Cardiac septum (tissue), 1 donor: ENCODE measurements at regions of chr16 and their contacts with region 1.

Region 1: DNA sequence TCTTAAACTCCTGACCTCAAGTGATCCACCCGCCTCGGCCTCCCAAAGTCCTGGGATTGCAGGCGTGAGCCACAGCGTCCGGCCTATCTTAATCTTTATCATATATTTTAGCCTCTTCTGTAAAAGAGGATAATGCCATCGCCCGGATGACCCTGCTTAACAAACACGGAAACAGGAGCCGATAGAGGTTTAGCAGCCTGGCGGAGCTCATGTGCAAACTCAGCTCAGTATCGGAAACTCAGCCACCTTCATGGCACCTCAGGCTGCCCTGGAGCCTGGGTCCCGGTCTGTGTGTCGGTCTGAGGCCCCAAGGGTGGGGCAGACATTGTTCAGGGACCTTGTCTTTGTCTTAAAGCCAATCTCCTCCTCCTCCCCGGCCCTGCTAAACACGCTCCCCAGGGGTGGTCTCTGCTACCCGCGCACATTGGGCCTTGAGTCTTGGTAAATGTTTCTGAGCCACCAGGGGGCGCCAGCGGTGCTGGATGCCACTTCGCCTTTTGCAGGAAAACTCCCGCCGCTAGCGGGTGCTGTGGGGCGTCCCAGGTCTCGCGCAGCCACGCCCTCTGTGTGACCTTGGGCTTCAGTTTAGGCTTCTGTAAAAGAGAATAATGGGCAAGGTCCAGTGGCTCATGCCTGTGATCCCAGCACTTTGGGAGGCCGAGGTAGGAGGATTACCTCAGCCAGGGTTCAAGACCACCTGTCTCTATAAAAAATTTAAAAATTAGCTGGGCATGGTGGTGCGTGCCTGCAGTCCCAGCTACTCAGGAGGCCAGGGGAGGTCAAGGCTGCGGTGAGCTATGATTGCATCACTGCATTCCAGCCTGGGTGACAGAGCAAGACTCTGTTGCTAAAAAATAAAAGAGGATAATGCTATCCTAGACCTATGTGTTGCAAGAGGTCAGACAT is 2.7 kb downstream of the CETP start:
- DNase-seq: peak; percentile 96

Region 2: GRCh38 chr16:56916571-56917403 is 47.7 kb before region 1 on chr16:
- intact Hi-C with region 1: no loop called
- DNase-seq: no peak

Region 3: GRCh38 chr16:57045694-57046381 is 81.3 kb after region 1 on chr16:
- intact Hi-C with region 1: loop called (anchors 5 kb)
- DNase-seq: peak; percentile 85

Region 4: GRCh38 chr16:57166951-57167350 is 202.5 kb after region 1 on chr16:
- intact Hi-C with region 1: no loop called
- DNase-seq: no peak